ENCODE measurements at regions of chr19 and their contacts with region 1.

Region 1: GRCh38 chr19:28472843-28473242 is 740.1 kb downstream of the UQCRFS1 start:
- DNase-seq: peak; percentile 44 to 68
- H3K4me3 ChIP-seq: no peak overlapping the region
- H3K27ac ChIP-seq: no peak overlapping the region
- H3K4me1 ChIP-seq: peaks cover 0 to 7% (median 0%) of the 10 kb centered on the region in 4 donors
- H3K27me3 ChIP-seq: no peaks in the 10 kb centered on the region
- CTCF ChIP-seq: no peak

Region 2: DNA sequence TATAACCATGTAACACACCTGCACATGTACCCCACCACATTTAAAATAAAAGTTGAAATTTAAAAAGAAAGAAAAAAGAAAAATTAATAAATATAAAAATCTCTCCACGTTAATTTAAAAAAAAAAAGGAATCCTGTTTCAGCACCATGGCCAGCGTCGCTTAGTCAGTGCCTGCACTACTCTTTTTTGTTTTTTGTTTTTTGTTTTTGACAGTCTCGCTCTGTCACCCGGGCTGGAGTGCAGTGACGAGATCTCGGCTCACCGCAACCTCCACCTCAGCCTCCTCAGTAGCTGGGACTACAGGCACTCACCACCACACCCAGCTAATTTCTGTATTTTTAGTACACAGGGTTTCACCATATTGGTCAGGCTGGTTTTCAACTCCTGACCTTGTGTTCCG is 95.8 kb before region 1 on chr19:
- intact Hi-C with region 1: no loop called
- DNase-seq: no peak
- H3K4me3 ChIP-seq: no peak overlapping the region
- H3K27ac ChIP-seq: no peak overlapping the region
- H3K4me1 ChIP-seq: no peaks in the 10 kb centered on the region
- H3K27me3 ChIP-seq: no peaks in the 10 kb centered on the region
- CTCF ChIP-seq: no peak

Region 3: DNA sequence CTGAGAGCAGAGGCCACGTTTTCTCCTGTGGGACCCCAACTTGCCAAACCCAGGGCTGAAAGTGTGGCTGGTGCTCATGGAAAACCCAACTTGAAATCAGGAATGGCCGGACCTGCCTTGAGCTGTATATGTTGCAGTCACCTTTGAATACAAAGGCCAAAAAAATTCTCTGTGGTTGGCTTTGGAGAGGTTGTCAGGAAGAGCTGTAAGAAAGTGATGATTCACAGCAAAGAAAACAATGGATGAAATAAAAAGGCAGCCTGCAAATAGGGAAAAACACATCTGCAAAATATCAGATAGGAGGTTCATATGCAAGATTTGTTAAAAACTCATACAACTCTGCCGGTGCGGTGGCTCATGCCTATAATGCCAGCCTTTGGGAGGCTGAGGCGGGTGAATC is 24.3 kb after region 1 on chr19:
- intact Hi-C with region 1: no loop called
- DNase-seq: no peak
- H3K4me3 ChIP-seq: no peak overlapping the region
- H3K27ac ChIP-seq: no peak overlapping the region
- H3K4me1 ChIP-seq: no peaks in the 10 kb centered on the region
- H3K27me3 ChIP-seq: no peaks in the 10 kb centered on the region
- CTCF ChIP-seq: no peak

Region 4: DNA sequence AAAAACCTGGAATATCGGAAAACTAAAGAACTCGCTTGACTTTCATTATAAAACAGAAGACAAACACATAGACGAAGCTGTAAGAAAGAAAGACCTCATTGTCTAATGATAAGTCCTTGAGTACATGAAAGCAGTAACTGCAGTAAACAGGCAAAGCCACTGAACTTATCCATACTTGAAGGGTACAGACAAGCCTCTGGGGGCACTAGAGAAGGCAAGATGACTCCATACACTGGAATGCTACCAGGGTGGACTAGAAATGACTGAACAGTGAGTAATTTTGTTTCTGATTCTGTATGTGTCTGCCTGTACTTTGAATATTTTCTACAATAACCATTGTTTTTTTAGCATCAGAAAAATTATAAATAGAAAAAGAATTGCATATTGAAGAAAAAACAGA is 232.2 kb after region 1 on chr19:
- intact Hi-C with region 1: loop called (anchors 10 kb)
- DNase-seq: no peak
- H3K4me3 ChIP-seq: no peak overlapping the region
- H3K27ac ChIP-seq: no peak overlapping the region
- H3K4me1 ChIP-seq: no peaks in the 10 kb centered on the region
- H3K27me3 ChIP-seq: no peaks in the 10 kb centered on the region
- CTCF ChIP-seq: no peak